ENCODE measurements at regions of chr6 and their contacts with region 1.

Region 1: GRCh38 chr6:43608310-43608763 is 20.7 kb downstream of the GTPBP2 start:
- DNase-seq: peak in 2 of 3 donors; percentile 43 to 90
- ATAC-seq: peak; percentile 72
- H3K4me3 ChIP-seq: no peak overlapping the region
- H3K4me1 ChIP-seq: no peaks in the 10 kb centered on the region
- CTCF ChIP-seq: peak; percentile 52

Region 2: GRCh38 chr6:43541774-43542471 is 66.4 kb before region 1 on chr6:
- intact Hi-C with region 1: loop called in 1 of 2 experiments (anchors 10 kb)
- DNase-seq: no peak
- ATAC-seq: no peak
- H3K4me3 ChIP-seq: no peak overlapping the region
- H3K4me1 ChIP-seq: no peaks in the 10 kb centered on the region
- CTCF ChIP-seq: no peak

Region 3: DNA sequence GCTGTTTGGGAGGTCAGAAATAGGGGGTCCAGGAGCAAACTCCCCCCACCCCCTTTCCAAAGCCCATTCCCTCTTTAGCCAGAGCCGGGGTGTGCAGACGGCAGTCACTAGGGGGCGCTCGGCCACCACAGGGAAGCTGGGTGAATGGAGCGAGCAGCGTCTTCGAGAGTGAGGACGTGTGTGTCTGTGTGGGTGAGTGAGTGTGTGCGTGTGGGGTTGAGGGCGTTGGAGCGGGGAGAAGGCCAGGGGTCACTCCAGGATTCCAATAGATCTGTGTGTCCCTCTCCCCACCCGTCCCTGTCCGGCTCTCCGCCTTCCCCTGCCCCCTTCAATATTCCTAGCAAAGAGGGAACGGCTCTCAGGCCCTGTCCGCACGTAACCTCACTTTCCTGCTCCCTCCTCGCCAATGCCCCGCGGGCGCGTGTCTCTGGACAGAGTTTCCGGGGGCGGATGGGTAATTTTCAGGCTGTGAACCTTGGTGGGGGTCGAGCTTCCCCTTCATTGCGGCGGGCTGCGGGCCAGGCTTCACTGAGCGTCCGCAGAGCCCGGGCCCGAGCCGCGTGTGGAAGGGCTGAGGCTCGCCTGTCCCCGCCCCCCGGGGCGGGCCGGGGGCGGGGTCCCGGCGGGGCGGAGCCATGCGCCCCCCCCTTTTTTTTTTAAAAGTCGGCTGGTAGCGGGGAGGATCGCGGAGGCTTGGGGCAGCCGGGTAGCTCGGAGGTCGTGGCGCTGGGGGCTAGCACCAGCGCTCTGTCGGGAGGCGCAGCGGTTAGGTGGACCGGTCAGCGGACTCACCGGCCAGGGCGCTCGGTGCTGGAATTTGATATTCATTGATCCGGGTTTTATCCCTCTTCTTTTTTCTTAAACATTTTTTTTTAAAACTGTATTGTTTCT is 161.4 kb after region 1 on chr6 and contains the start of gene VEGFA:
- intact Hi-C with region 1: no loop called
- DNase-seq: peak; percentile 91 to 95 (median 93)
- ATAC-seq: peak; percentile 68
- H3K4me3 ChIP-seq: peak within 1 kb of the TSS; percentile 81
- H3K4me1 ChIP-seq: peaks cover 34% of the 10 kb centered on the region
- CTCF ChIP-seq: peak; percentile 89
- total RNA-seq, gene VEGFA: 89.4 to 165 (median 94.7) TPM